ENCODE measurements at regions of chr4 and their contacts with region 1.

Region 1: GRCh38 chr4:113394730-113395530 is 345.5 kb downstream of the ANK2 start:
- DNase-seq: peak; percentile 58
- CTCF ChIP-seq: peak; percentile 67

Region 2: GRCh38 chr4:113355550-113356371 is 39.2 kb before region 1 on chr4:
- CTCF ChIA-PET with region 1: interaction called, 12 read pairs
- POLR2A ChIA-PET with region 1: no interaction called
- DNase-seq: peak; percentile 68
- CTCF ChIP-seq: peak; percentile 34

Region 3: GRCh38 chr4:113378836-113379235 is 16.1 kb before region 1 on chr4:
- CTCF ChIA-PET with region 1: interaction called, 10 read pairs
- POLR2A ChIA-PET with region 1: no interaction called
- DNase-seq: no peak
- CTCF ChIP-seq: no peak

Region 4: DNA sequence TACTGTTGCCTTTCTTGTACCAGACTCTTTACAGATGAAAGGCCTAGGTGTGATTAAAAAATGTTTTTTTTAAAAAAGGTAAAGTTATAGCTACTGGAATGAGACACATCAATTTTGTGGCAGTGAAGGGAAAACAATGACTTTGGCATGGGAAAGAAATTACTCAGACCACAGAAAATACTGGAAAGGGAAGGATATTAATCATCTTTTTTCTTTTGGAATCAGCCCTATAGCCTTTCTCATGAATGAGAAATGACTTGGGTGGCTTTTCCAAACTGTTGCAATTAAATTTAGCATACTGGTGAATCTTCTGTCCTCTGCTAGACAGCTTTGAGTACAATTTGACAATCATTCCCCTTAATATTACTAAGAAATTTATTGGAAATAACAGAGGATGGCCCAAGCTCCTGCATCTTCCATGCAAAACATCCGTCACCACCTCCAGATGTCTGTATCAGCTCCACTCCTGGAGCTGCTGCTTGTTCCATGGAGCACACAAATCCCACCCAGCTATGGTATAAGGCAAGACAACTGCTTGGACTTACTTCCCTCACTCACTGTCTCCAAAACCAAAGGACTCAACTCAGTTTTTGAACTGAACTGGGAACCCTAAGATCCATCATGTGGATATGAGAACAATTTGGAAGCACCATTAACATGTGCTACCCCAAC is 682.1 kb after region 1 on chr4:
- CTCF ChIA-PET with region 1: interaction called, 35 read pairs
- POLR2A ChIA-PET with region 1: no interaction called
- DNase-seq: no peak
- CTCF ChIP-seq: no peak

Measured in GM10248 (cell line).